Activated CD4-positive, alpha-beta memory T cell treated with anti-CD3 and anti-CD28 coated beads for 36 hours (primary cell): ENCODE measurements at regions of chr6 and their contacts with region 1.

Region 1: GRCh38 chr6:32700391-32701040 is 34.1 kb upstream of the HLA-DQB1 start:
- DNase-seq: peak; percentile 20
- H3K4me3 Mint-ChIP-seq: no peak overlapping the region
- H3K27ac Mint-ChIP-seq: no peak overlapping the region
- H3K4me1 Mint-ChIP-seq: peaks cover 2% of the 10 kb centered on the region
- H3K27me3 Mint-ChIP-seq: peaks cover 18% of the 10 kb centered on the region

Region 2: DNA sequence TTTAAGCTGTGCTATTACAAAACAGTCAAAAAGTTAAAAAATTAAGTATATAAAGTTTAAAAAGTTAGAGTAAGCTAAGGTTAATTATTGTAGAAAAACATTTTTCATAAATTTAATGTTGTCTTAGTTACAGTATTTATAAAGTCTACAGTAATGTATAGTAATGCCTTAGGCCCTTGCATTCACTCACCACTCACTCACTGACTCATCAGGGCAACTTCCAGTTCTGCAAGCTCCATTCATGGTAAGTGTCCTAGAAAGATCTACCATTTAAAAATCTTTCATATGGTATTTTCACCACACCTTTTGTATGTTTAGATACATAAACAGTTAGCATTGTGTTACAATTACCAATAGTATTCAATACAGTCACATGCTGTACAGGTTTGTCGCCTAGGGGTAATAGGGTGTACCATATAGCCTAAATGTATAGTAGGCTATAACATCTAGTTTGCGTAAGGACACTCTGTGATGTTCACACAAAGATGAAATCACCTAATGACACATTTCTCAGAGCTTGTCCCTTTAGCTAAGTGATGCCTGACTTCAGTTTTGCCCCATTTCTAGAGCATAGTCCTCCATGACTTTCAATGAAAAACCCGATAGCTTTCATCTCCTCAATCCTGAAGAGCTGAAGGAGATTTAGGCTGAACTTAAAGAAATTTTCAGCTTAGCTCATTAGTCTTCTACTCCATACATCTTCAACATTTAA is 275.8 kb before region 1 on chr6:
- CTCF ChIA-PET with region 1: interaction called, 11 read pairs
- POLR2A ChIA-PET with region 1: no interaction called
- intact Hi-C with region 1: no loop called
- DNase-seq: no peak
- H3K4me3 Mint-ChIP-seq: no peak overlapping the region
- H3K27ac Mint-ChIP-seq: no peak overlapping the region
- H3K4me1 Mint-ChIP-seq: no peaks in the 10 kb centered on the region
- H3K27me3 Mint-ChIP-seq: peaks cover 14% of the 10 kb centered on the region

Region 3: DNA sequence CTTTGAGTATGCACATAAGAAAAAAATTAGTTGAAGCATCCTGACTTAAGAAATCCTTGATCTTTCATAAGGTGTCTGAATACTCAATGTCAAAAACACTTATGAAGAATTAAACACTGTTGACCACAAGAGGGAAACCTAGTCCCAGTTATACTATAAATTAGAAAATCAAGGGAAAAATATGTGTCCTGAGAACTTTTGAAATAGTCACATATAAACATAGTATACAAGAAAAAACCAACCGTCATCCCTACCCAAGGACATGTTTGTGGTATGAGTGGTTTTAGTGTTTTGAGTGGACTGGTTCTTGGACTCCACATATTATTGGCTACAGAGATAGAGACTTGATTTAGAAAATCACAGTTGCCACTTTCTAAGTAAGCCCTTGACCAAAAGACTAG is 268.5 kb before region 1 on chr6:
- CTCF ChIA-PET with region 1: interaction called, 15 read pairs
- POLR2A ChIA-PET with region 1: no interaction called
- intact Hi-C with region 1: loop called (anchors 1 kb)
- DNase-seq: no peak
- H3K4me3 Mint-ChIP-seq: no peak overlapping the region
- H3K27ac Mint-ChIP-seq: no peak overlapping the region
- H3K4me1 Mint-ChIP-seq: no peaks in the 10 kb centered on the region
- H3K27me3 Mint-ChIP-seq: peaks cover 2% of the 10 kb centered on the region

Region 4: DNA sequence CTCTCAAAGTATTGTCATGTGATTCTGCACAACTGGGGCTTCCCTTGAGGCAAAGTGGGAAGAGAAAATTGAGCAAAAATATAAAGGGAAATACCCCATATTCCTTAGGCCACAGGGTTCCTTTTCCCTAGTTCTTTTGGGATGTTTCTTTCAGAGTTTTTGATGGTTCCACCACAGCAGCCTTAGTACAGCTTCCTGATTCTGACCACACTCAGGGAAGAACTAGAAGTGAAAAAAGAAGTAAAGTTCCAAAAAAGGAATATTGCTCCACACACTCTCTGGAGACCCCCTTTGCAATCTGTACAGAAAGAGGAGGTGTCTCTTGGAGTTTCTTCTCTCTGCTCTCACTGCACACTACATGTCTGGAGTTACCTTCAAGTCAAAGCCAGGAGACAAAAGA is 12.7 kb after region 1 on chr6:
- CTCF ChIA-PET with region 1: interaction called, 21 read pairs
- POLR2A ChIA-PET with region 1: no interaction called
- intact Hi-C with region 1: no loop called
- DNase-seq: no peak
- H3K4me3 Mint-ChIP-seq: no peak overlapping the region
- H3K27ac Mint-ChIP-seq: no peak overlapping the region
- H3K4me1 Mint-ChIP-seq: no peaks in the 10 kb centered on the region
- H3K27me3 Mint-ChIP-seq: peaks cover 4% of the 10 kb centered on the region

Region 5: DNA sequence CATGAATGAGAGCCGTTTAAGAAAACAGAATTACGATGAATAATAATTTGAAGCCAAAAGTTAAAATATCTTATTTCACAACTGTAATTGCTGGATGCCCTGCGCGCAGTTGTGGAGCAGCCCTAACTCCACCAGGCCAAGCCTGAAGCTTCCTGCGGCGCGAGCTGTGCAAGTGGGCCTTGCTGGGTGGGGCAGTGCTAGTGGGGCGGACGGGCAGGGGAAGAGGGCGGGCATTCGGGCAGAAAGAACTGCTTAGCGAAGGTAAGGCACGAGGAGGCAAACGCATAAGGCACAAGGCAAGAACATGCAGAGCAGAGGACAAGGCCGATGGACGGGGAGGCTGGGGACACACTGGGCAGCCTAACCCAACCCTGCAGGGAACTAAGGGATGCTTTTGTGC is 60.6 kb after region 1 on chr6:
- CTCF ChIA-PET with region 1: no interaction called
- POLR2A ChIA-PET with region 1: no interaction called
- intact Hi-C with region 1: no loop called
- DNase-seq: no peak
- H3K4me3 Mint-ChIP-seq: no peak overlapping the region
- H3K27ac Mint-ChIP-seq: no peak overlapping the region
- H3K4me1 Mint-ChIP-seq: no peaks in the 10 kb centered on the region
- H3K27me3 Mint-ChIP-seq: peaks cover 37% of the 10 kb centered on the region

Region 6: GRCh38 chr6:32785781-32786533 is 85.4 kb after region 1 on chr6:
- CTCF ChIA-PET with region 1: interaction called, 20 read pairs
- POLR2A ChIA-PET with region 1: no interaction called
- intact Hi-C with region 1: loop called (anchors 5 kb)
- DNase-seq: peak; percentile 21
- H3K4me3 Mint-ChIP-seq: no peak overlapping the region
- H3K27ac Mint-ChIP-seq: no peak overlapping the region
- H3K4me1 Mint-ChIP-seq: no peaks in the 10 kb centered on the region
- H3K27me3 Mint-ChIP-seq: peaks cover 42% of the 10 kb centered on the region